Transverse colon (tissue), 4 donors: ENCODE measurements at regions of chr4 and their contacts with region 1.

Region 1: DNA sequence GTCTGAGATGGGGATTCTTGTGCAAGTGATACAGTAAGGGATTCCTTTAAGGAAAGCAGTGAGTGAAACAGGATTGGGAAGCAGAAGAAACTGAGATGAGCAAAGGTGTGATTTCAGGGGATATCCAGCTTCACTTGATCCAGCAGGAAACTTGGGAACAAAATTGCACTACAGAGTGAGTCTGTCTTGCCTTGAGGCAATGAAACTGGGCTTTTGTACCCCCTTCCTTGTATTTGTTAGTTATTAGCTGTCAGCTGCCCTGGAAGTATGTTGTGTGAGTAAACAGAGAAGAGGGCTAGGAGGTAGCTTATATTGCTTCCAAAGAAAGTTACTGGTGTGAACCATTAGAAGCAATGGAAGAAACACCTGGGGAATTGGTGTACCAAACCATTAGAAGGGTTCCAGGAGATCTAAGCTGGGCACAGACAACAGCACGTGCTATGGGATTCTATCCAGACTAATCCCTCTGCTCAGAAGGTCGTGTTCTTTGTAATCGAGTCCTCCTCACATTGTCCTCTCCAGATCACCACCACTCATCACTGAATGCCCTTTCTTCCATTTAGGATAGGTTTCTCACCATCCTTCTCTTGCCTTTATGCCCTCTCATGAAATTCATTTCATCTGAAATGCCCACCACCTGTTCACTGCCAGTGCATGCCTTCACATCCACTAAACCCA is 76.0 kb downstream of the PDLIM5 start:
- DNase-seq: no peak
- H3K4me3 ChIP-seq: no peak overlapping the region
- H3K27ac ChIP-seq: peak overlapping the region in 2 of 4 donors; percentile 34 to 72
- H3K4me1 ChIP-seq: peaks cover 8 to 47% (median 15%) of the 10 kb centered on the region in 4 donors
- H3K27me3 ChIP-seq: no peaks in the 10 kb centered on the region
- CTCF ChIP-seq: no peak
- EP300 ChIP-seq: no peak
- POLR2A ChIP-seq: no peak

Region 2: DNA sequence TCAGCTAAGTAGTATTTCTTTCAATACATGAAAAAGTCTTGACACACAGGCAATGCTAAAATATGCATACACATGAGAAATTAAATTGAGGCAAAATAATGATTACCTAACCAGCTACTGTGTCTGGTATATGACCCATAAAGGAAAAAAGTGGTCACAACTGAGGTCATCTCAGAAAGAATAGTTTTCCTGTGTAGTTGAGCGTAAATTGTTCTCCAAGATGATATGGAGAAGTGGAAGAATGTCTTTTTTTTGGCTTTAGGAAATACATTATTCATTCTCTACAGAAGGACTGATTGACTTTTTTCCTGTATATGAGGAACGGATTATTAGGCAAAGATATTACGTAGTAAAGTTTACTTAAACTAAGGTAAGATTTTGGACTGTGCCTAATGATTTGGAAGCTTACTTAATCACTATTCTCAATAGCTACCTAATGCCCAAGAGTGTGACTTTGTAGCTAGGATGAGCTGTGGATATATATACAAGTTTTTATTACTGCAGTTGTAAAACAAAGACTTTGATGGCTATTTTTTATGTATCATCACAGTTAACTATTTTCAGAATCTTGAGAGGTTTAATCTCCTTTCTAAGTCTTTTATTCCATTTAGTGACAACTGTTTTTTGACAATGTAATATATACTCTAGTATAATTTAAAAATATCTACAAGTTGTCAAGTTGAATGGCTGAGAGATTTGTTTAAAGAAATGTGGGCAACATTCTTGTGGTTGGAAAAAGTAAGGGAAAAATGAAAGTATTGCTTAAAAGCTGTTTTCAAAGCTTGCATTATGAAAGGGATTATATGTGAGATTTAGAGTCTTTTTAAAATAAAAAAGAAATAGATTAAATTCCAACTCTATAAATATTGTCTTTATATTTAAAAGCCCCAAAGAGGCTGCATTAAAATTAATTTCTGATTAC is 24.2 kb after region 1 on chr4:
- in situ Hi-C with region 1: no loop called
- intact Hi-C with region 1: loop called (anchors 1 kb)
- DNase-seq: no peak
- H3K4me3 ChIP-seq: no peak overlapping the region
- H3K27ac ChIP-seq: no peak overlapping the region
- H3K4me1 ChIP-seq: peaks cover 0 to 13% (median 6%) of the 10 kb centered on the region in 4 donors
- H3K27me3 ChIP-seq: no peaks in the 10 kb centered on the region
- CTCF ChIP-seq: no peak
- EP300 ChIP-seq: no peak
- POLR2A ChIP-seq: no peak